Activated T-helper 1 cell treated with anti-CD3 and anti-CD28 coated beads, Interleukin-12 subunit alpha, Interleukin-12 subunit beta, Interleukin-2, Interleukin-4 antibody, amounts not matched to agents 30 ng/mL and 10 ng/mL and 1 ng/mL, durations not matched to agents 14 hours and 24 hours and 36 hours (primary cell): ENCODE measurements at regions of chr7 and their contacts with region 1.

Region 1: DNA sequence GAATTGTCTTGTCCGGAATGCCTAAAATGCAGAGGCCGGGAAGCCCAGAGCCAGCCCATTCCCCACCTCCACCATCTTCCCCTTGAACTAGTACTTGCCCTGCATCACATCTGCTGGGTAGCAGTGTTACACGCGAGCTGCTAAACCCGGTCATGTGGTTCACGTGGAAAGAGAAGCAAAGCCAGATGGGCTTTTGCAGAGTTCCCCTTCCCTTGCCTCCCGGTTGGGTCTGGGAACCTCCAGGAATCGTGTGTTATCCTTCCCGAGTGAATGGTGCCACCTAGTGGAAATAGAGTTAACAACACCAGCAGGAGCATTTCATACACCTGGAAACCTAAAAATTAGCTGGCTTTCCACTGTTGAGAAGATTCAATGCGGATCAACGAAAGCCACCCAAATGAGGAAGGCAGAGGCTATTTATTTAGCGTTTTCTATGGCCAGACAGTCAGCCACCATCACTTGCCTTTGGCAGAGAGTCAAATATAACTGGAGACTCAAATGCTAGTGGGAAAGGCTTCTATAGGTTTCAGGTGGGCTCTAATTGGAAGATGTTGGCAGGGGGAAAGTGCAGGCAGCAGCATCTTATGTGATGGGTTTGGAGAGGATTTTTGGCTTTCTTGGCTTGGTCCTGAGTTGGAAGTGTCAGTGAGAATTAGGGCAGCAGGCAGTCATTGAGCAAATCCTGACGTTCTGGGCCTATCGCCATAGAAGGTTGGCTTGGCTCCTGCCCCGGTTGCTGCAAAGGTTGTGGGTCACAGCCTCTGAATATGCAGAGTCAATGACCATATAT is 12.9 kb upstream of the DENND2A start:
- DNase-seq: no peak
- H3K4me3 Mint-ChIP-seq: no peak overlapping the region
- H3K27ac Mint-ChIP-seq: no peak overlapping the region
- H3K4me1 Mint-ChIP-seq: peaks cover 21% of the 10 kb centered on the region
- H3K27me3 Mint-ChIP-seq: peaks cover 49% of the 10 kb centered on the region

Region 2: GRCh38 chr7:140084972-140085371 is 568.5 kb before region 1 on chr7:
- intact Hi-C with region 1: no loop called
- DNase-seq: peak; percentile 36
- H3K4me3 Mint-ChIP-seq: peak overlapping the region; percentile 9
- H3K27ac Mint-ChIP-seq: peak overlapping the region; percentile 76
- H3K4me1 Mint-ChIP-seq: peaks cover 39% of the 10 kb centered on the region
- H3K27me3 Mint-ChIP-seq: no peaks in the 10 kb centered on the region

Region 3: DNA sequence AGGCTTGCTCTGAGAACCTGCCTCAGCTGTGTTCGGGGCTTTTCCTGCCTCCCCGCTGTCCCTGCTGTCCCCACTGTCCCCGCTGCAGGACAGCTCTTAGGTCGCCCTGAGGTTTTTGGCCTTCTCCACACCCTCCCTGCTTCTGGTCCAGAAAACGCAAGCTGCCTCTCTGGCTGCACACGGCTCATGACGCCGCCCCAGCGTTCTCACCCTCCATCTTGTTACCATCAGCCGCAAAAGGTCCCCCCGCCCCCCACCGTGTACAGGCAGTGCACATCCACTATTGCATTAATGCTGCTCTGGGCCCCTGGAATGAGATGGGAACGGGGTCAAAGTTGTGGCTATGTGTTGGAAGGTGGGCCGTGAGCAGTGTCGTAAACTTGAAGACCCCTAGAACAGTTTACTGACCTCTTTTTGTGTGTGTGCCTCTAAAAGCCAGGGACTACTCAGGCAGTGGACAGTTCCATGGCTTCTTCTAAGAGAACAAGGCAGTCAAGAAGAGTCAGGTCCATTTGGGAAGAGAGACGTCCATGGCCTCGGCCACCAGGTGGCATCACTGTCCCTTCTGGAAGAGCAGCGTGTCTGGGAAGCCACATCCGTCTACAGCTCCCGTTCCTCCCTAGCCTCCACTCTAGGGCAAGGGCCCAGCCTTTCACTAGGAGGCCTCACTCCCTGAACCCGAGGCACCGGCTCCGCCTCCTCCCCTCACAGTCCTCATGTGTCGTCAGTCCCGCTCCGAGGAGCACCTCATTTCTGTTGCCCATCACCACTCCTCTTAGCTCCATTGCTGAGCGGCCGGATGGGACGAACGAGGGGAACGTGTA is 135.8 kb before region 1 on chr7:
- intact Hi-C with region 1: loop called (anchors 1 kb)
- DNase-seq: peak; percentile 38
- H3K4me3 Mint-ChIP-seq: no peak overlapping the region
- H3K27ac Mint-ChIP-seq: no peak overlapping the region
- H3K4me1 Mint-ChIP-seq: no peaks in the 10 kb centered on the region
- H3K27me3 Mint-ChIP-seq: peaks cover 11% of the 10 kb centered on the region